CD8-positive, alpha-beta T cell (primary cell): ENCODE measurements at regions of chr9 and their contacts with region 1.

Region 1: GRCh38 chr9:105244003-105244733 is at the start of gene SLC44A1:
- DNase-seq: peak; percentile 77 to 95 (median 89)
- ATAC-seq: peak; percentile 83
- H3K4me3 ChIP-seq: peak within 1 kb of the TSS; percentile 61 to 63
- H3K4me3 Mint-ChIP-seq: peak within 1 kb of the TSS; percentile 90
- H3K27ac ChIP-seq: peak within 1 kb of the TSS; percentile 48 to 72
- H3K27ac Mint-ChIP-seq: peak within 1 kb of the TSS; percentile 90
- H3K4me1 ChIP-seq: peaks cover 12% of the 10 kb centered on the region
- H3K4me1 Mint-ChIP-seq: peaks cover 28% of the 10 kb centered on the region
- H3K27me3 ChIP-seq: peaks cover 0 to 3% of the 10 kb centered on the region in 2 experiments
- H3K27me3 Mint-ChIP-seq: peaks cover 10% of the 10 kb centered on the region
- CTCF ChIP-seq: no peak
- total RNA-seq, gene SLC44A1: 2.4 to 2.5 TPM

Region 2: DNA sequence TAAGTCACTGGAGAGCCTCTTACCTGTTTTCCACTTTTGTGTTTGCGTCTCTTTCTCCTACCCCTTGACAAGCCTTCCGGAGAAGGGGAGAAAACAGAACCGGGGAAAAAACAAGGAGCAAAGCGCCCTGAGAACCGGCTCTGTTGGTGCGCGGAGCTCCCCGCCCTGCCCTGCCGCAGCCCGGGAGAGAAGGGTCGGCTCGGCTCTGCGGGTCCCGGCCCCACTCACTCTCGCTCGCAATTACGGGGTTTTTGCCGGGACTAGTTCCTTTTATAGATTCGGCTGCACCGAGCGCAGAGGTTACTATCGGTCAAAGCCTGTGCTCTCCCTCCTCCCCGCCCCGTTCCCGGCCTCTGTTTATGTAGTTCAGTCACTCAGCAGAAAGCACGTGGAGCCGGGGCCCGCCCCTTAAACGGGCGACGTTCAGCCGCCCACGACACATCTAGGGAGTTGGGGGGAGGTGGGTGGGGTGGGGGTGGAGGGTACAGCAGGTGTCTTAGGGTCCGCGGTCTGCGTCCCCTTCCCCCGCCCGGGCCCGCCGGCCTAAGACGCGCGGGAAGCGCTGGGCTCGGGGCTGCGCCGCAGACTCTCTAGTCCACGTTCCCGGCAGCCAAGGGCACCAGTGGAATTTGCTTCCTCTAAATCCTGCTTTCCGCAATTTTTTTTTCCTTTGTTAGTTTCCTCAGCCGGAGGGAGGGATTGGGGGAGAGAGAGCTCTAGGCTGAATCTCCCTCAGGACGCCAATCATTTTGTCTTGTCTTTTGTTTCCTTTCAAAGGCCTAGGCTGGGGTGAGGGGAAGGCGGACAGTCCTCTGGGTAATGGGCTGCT is 316.0 kb before region 1 on chr9 and contains the start of gene ABCA1:
- CTCF ChIA-PET with region 1: no interaction called
- POLR2A ChIA-PET with region 1: no interaction called
- intact Hi-C with region 1: loop called (anchors 1 to 5 kb)
- DNase-seq: peak; percentile 42 to 87 (median 65)
- ATAC-seq: peak; percentile 78
- H3K4me3 ChIP-seq: peak within 1 kb of the TSS; percentile 56 to 71
- H3K4me3 Mint-ChIP-seq: peak within 1 kb of the TSS; percentile 91
- H3K27ac ChIP-seq: no peak within 1 kb of the TSS
- H3K27ac Mint-ChIP-seq: peak within 1 kb of the TSS; percentile 80
- H3K4me1 ChIP-seq: peaks cover 19% of the 10 kb centered on the region
- H3K4me1 Mint-ChIP-seq: peaks cover 15% of the 10 kb centered on the region
- H3K27me3 ChIP-seq: peaks cover 0 to 24% of the 10 kb centered on the region in 2 experiments
- H3K27me3 Mint-ChIP-seq: peaks cover 11% of the 10 kb centered on the region
- CTCF ChIP-seq: no peak
- total RNA-seq, gene ABCA1: 11.2 to 11.4 TPM

Region 3: DNA sequence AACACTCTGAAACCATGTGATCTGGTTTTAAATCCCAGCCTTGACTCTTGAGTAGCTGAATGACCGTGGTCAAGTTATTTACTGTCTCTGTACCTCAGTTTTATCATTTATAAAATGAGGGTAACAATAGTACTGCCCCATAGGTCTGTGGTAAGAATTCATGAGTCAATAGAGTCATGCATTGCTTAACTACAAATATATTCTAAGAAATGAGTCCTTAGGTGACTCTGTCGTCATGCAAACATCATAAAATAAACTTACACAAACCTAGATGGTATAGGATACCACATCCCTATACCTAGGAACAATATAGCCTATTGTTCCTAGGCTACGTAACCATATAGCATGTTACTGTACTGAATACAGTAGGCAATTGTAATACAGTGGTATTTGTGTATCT is 295.9 kb before region 1 on chr9:
- CTCF ChIA-PET with region 1: no interaction called
- POLR2A ChIA-PET with region 1: no interaction called
- intact Hi-C with region 1: no loop called
- DNase-seq: no peak
- ATAC-seq: no peak
- H3K4me3 ChIP-seq: no peak overlapping the region
- H3K4me3 Mint-ChIP-seq: no peak overlapping the region
- H3K27ac ChIP-seq: no peak overlapping the region
- H3K27ac Mint-ChIP-seq: no peak overlapping the region
- H3K4me1 ChIP-seq: no peaks in the 10 kb centered on the region
- H3K4me1 Mint-ChIP-seq: no peaks in the 10 kb centered on the region
- H3K27me3 ChIP-seq: no peaks in the 10 kb centered on the region
- H3K27me3 Mint-ChIP-seq: no peaks in the 10 kb centered on the region
- CTCF ChIP-seq: no peak

Region 4: GRCh38 chr9:104991144-104991953 is 252.8 kb before region 1 on chr9:
- CTCF ChIA-PET with region 1: no interaction called
- POLR2A ChIA-PET with region 1: interaction called, 3 read pairs
- intact Hi-C with region 1: loop called (anchors 1 to 5 kb)
- DNase-seq: peak; percentile 58 to 93 (median 81)
- ATAC-seq: peak; percentile 72
- H3K4me3 ChIP-seq: peak overlapping the region; percentile 73 to 81
- H3K4me3 Mint-ChIP-seq: peak overlapping the region; percentile 89
- H3K27ac ChIP-seq: peak overlapping the region; percentile 78 to 87
- H3K27ac Mint-ChIP-seq: peak overlapping the region; percentile 96
- H3K4me1 ChIP-seq: peaks cover 38% of the 10 kb centered on the region
- H3K4me1 Mint-ChIP-seq: peaks cover 38% of the 10 kb centered on the region
- H3K27me3 ChIP-seq: peaks cover 0 to 2% of the 10 kb centered on the region in 2 experiments
- H3K27me3 Mint-ChIP-seq: peaks cover 4% of the 10 kb centered on the region
- CTCF ChIP-seq: no peak

Region 5: GRCh38 chr9:105093685-105094084 is 150.5 kb before region 1 on chr9:
- CTCF ChIA-PET with region 1: no interaction called
- POLR2A ChIA-PET with region 1: no interaction called
- intact Hi-C with region 1: no loop called
- DNase-seq: no peak
- ATAC-seq: no peak
- H3K4me3 ChIP-seq: no peak overlapping the region
- H3K4me3 Mint-ChIP-seq: no peak overlapping the region
- H3K27ac ChIP-seq: no peak overlapping the region
- H3K27ac Mint-ChIP-seq: no peak overlapping the region
- H3K4me1 ChIP-seq: no peaks in the 10 kb centered on the region
- H3K4me1 Mint-ChIP-seq: no peaks in the 10 kb centered on the region
- H3K27me3 ChIP-seq: no peaks in the 10 kb centered on the region
- H3K27me3 Mint-ChIP-seq: peaks cover 2% of the 10 kb centered on the region
- CTCF ChIP-seq: no peak

Region 6: DNA sequence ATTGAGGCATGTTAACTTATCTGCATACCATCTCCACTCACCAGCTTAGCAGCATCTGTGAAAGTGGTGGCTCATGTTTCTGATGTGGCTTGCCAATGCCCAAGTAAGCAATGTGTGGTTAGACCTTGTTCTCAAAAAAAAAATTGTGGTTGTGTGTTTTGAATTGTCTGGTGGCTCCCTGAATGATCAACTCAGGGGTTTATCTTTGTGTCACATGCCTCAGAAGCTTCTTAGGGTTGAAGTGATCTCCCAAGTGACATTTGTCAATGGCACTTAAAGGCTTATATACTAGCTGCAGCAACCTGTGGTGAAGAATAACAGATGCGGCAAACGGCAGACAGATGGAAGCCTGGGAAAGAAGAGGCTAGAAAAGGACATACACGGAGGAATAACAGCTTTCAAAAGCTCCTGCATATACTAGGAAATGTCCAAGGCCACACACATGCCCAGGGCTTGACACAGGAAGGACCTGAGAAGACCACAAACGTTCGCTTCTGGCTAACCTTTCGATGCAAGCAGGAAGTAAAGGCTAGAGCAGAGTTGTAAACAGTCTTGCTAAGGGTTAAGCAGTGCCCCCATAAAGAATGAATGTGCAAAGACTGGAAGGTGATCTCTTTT is 161.5 kb after region 1 on chr9:
- CTCF ChIA-PET with region 1: interaction called, 4 read pairs
- POLR2A ChIA-PET with region 1: interaction called, 12 read pairs
- intact Hi-C with region 1: loop called in 1 of 2 experiments (anchors 2 kb)
- DNase-seq: peak; percentile 25 to 90 (median 57)
- ATAC-seq: peak; percentile 89
- H3K4me3 ChIP-seq: peak overlapping the region; percentile 3 to 12
- H3K4me3 Mint-ChIP-seq: peak overlapping the region; percentile 63
- H3K27ac ChIP-seq: no peak overlapping the region
- H3K27ac Mint-ChIP-seq: peak overlapping the region; percentile 74
- H3K4me1 ChIP-seq: peaks cover 23% of the 10 kb centered on the region
- H3K4me1 Mint-ChIP-seq: peaks cover 30% of the 10 kb centered on the region
- H3K27me3 ChIP-seq: peaks cover 17 to 30% of the 10 kb centered on the region in 2 experiments
- H3K27me3 Mint-ChIP-seq: peaks cover 48% of the 10 kb centered on the region
- CTCF ChIP-seq: no peak

Region 7: GRCh38 chr9:105447814-105448812 is 203.9 kb after region 1 on chr9 and contains the start of gene FSD1L:
- CTCF ChIA-PET with region 1: no interaction called
- POLR2A ChIA-PET with region 1: no interaction called
- intact Hi-C with region 1: loop called in 1 of 2 experiments (anchors 1 kb)
- DNase-seq: peak; percentile 45 to 89 (median 74)
- ATAC-seq: peak; percentile 90
- H3K4me3 ChIP-seq: peak within 1 kb of the TSS; percentile 62 to 76
- H3K4me3 Mint-ChIP-seq: peak within 1 kb of the TSS; percentile 81
- H3K27ac ChIP-seq: no peak within 1 kb of the TSS
- H3K27ac Mint-ChIP-seq: no peak within 1 kb of the TSS
- H3K4me1 ChIP-seq: no peaks in the 10 kb centered on the region
- H3K4me1 Mint-ChIP-seq: peaks cover 8% of the 10 kb centered on the region
- H3K27me3 ChIP-seq: no peaks in the 10 kb centered on the region
- H3K27me3 Mint-ChIP-seq: no peaks in the 10 kb centered on the region
- CTCF ChIP-seq: no peak
- total RNA-seq, gene FSD1L: 0.24 to 0.33 TPM

Region 8: DNA sequence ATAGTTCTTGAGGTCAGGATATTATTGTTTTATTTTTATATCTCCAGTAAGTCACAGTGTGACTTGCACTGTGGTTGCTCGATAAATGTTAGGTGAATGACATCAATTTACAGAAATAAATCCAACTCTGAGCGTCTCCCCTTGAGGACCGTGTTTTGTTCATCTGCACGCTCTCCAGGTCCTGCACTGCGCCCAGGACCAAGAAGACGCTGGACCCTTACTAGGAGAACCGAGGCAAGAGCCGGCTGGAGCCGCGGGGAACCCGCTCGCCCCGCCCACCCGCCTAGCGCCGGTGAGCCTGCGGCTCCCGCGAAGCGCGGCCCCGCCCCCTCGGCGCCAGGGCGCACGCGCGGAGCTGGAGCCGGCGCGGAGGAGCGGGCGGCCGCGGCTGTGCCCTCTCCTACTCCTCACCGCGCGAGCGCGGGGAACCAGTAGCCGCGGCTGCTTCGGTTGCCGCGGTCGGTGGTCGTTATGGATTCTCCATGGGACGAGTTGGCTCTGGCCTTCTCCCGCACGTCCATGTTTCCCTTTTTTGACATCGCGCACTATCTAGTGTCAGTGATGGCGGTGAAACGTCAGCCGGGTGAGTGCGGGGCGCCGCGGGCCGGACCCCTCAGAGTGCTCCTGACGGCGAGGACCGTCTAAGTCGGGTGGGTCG is 450.2 kb after region 1 on chr9 and contains the start of gene TMEM38B:
- CTCF ChIA-PET with region 1: no interaction called
- POLR2A ChIA-PET with region 1: no interaction called
- intact Hi-C with region 1: loop called (anchors 1 to 5 kb)
- DNase-seq: peak; percentile 54 to 91 (median 73)
- ATAC-seq: peak; percentile 90
- H3K4me3 ChIP-seq: peak within 1 kb of the TSS; percentile 69 to 78
- H3K4me3 Mint-ChIP-seq: peak within 1 kb of the TSS; percentile 90
- H3K27ac ChIP-seq: peak within 1 kb of the TSS; percentile 20 to 58
- H3K27ac Mint-ChIP-seq: peak within 1 kb of the TSS; percentile 73
- H3K4me1 ChIP-seq: peaks cover 15% of the 10 kb centered on the region
- H3K4me1 Mint-ChIP-seq: peaks cover 32% of the 10 kb centered on the region
- H3K27me3 ChIP-seq: peaks cover 0 to 13% of the 10 kb centered on the region in 2 experiments
- H3K27me3 Mint-ChIP-seq: peaks cover 32% of the 10 kb centered on the region
- CTCF ChIP-seq: no peak
- total RNA-seq, gene TMEM38B: 9.5 to 14.1 TPM